H1 (cell line): ENCODE measurements at regions of chr1 and their contacts with region 1.

Region 1: GRCh38 chr1:112715264-112716053 is at the start of gene PPM1J:
- DNase-seq: peak; percentile 85 to 100
- H3K4me3 ChIP-seq: peak within 1 kb of the TSS; percentile 60 to 81 (median 73)
- H3K27ac ChIP-seq: no peak within 1 kb of the TSS
- H3K4me1 ChIP-seq: peaks cover 0 to 20% (median 13%) of the 10 kb centered on the region in 4 experiments; a peak in 6 of 7 replicates
- H3K27me3 ChIP-seq: peaks cover 0 to 29% (median 16%) of the 10 kb centered on the region in 4 experiments; a peak in 5 of 7 replicates
- CTCF ChIP-seq: no peak
- EP300 ChIP-seq: no peak
- POLR2A ChIP-seq: no peak
- RAD21 ChIP-seq: no peak; a peak in 1 of 4 replicates
- total RNA-seq, gene PPM1J: 17.5 and 19.4 TPM in 2 replicates

Region 2: DNA sequence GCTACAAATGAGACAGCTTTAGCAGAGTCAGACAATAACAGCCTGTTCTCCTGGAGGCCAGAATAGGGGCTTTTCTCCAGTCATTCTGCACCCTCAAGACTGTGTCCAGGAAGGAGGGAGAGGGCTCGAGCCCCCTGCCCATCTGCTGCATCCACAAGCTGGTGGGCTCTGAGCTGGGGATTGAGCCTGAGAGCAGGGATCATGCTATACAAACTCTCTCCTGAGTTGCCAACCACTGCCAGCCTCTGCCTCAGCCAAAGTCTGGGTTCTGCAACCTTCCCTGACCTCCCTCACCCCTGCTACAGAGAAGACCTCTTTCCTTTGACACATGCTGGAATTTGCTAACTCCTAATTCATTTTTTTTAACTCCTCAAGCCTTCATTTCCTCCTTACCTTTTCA is 14.4 kb after region 1 on chr1:
- CTCF ChIA-PET with region 1: interaction called, 31 read pairs
- POLR2A ChIA-PET with region 1: interaction called, 3 read pairs
- DNase-seq: no peak
- H3K4me3 ChIP-seq: no peak overlapping the region
- H3K27ac ChIP-seq: no peak overlapping the region
- H3K4me1 ChIP-seq: no peaks in the 10 kb centered on the region
- H3K27me3 ChIP-seq: peaks cover 0 to 3% (median 0%) of the 10 kb centered on the region in 4 experiments; a peak in 1 of 7 replicates
- CTCF ChIP-seq: no peak
- EP300 ChIP-seq: no peak
- POLR2A ChIP-seq: no peak
- RAD21 ChIP-seq: no peak

Region 3: GRCh38 chr1:112754116-112754628 is 38.7 kb after region 1 on chr1:
- CTCF ChIA-PET with region 1: interaction called, 84 read pairs
- POLR2A ChIA-PET with region 1: no interaction called
- DNase-seq: no peak
- H3K4me3 ChIP-seq: no peak overlapping the region
- H3K27ac ChIP-seq: no peak overlapping the region
- H3K4me1 ChIP-seq: no peaks in the 10 kb centered on the region
- H3K27me3 ChIP-seq: no peaks in the 10 kb centered on the region; a peak in 1 of 7 replicates
- CTCF ChIP-seq: no peak
- EP300 ChIP-seq: no peak
- POLR2A ChIP-seq: no peak
- RAD21 ChIP-seq: no peak

Region 4: GRCh38 chr1:112794654-112795239 is 79.3 kb after region 1 on chr1:
- CTCF ChIA-PET with region 1: interaction called, 547 read pairs
- POLR2A ChIA-PET with region 1: interaction called, 5 read pairs
- DNase-seq: no peak
- H3K4me3 ChIP-seq: no peak overlapping the region
- H3K27ac ChIP-seq: 0 out of 2 replicates have a peak overlapping the region, but pooled peaks have one; percentile 52
- H3K4me1 ChIP-seq: peaks cover 2 to 25% (median 14%) of the 10 kb centered on the region in 4 experiments
- H3K27me3 ChIP-seq: no peaks in the 10 kb centered on the region; a peak in 1 of 7 replicates
- CTCF ChIP-seq: no peak
- EP300 ChIP-seq: no peak
- POLR2A ChIP-seq: no peak
- RAD21 ChIP-seq: no peak

Region 5: GRCh38 chr1:112818990-112819689 is 103.7 kb after region 1 on chr1:
- CTCF ChIA-PET with region 1: interaction called, 13 read pairs
- POLR2A ChIA-PET with region 1: interaction called, 10 read pairs
- DNase-seq: no peak
- H3K4me3 ChIP-seq: no peak overlapping the region
- H3K27ac ChIP-seq: peak overlapping the region; percentile 57
- H3K4me1 ChIP-seq: peaks cover 7 to 27% (median 21%) of the 10 kb centered on the region in 4 experiments
- H3K27me3 ChIP-seq: no peaks in the 10 kb centered on the region
- CTCF ChIP-seq: no peak
- EP300 ChIP-seq: no peak
- POLR2A ChIP-seq: no peak
- RAD21 ChIP-seq: no peak

Region 6: GRCh38 chr1:113042285-113043143 is 327.1 kb after region 1 on chr1:
- CTCF ChIA-PET with region 1: interaction called, 33 read pairs
- POLR2A ChIA-PET with region 1: interaction called, 4 read pairs
- DNase-seq: peak; percentile 85 to 96
- H3K4me3 ChIP-seq: peak overlapping the region in 3 of 4 experiments; percentile 14 to 37 (median 21); a peak in 5 of 8 replicates
- H3K27ac ChIP-seq: peak overlapping the region; percentile 92
- H3K4me1 ChIP-seq: peaks cover 15 to 35% (median 28%) of the 10 kb centered on the region in 4 experiments
- H3K27me3 ChIP-seq: no peaks in the 10 kb centered on the region
- CTCF ChIP-seq: peak; percentile 65 to 76 (median 68)
- EP300 ChIP-seq: peak in 1 of 2 experiments; percentile 54; a peak in 1 of 3 replicates
- POLR2A ChIP-seq: peak in 1 of 2 experiments; percentile 50; a peak in 1 of 3 replicates
- RAD21 ChIP-seq: peak; percentile 91 to 93